H1 (cell line): ENCODE measurements at regions of chr19 and their contacts with region 1.

Region 1: DNA sequence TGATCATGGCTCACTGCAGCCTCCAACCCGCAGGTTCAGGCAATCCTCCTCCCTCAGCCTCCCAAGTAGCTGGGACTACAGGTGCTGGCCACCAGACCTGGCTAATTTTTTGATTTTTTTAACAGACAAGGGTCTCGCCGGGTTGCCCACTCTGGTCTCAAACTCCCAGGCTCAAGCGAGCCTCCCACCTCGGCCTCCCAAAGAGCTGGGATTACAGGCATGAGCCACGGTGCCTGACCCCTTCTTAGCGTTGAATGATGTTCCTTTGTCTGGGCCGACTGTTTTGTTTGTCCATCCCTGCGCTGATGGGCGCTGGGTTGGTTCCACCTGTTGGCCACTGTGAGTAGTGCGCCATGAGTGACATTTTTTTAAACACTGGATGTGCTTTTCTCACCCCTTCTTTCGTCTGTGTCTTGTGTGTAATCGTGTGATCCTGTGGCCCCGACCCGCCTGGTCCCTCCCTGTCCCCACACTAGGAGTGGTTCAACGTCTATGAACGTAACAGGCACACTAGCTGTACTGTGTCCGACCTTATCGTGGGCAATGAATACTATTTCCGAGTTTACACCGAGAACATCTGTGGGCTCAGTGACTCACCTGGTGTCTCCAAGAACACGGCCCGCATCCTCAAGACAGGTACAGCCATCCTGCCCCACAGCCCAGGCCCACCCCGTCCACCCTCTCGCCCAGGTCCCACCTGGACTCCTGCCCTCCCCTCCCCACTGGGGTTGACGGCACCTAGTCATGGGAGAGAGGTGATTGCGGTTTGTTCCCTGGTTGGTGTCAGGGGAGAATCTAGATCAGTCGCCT is 15.0 kb upstream of the EMC10 start:
- DNase-seq: peak in 1 of 2 experiments; percentile 84
- H3K4me3 ChIP-seq: no peak overlapping the region
- H3K27ac ChIP-seq: no peak overlapping the region
- H3K4me1 ChIP-seq: peaks cover 0 to 10% (median 2%) of the 10 kb centered on the region in 4 experiments; a peak in 5 of 7 replicates
- H3K27me3 ChIP-seq: no peaks in the 10 kb centered on the region
- CTCF ChIP-seq: peak; percentile 81 to 92 (median 84)
- EP300 ChIP-seq: no peak
- POLR2A ChIP-seq: no peak
- RAD21 ChIP-seq: peak; percentile 84 to 86

Region 2: GRCh38 chr19:50357178-50358100 is 103.8 kb before region 1 on chr19:
- CTCF ChIA-PET with region 1: interaction called, 11 read pairs
- POLR2A ChIA-PET with region 1: interaction called, 3 read pairs
- DNase-seq: peak; percentile 56 to 95
- H3K4me3 ChIP-seq: peak overlapping the region in 1 of 4 experiments; percentile 16; a peak in 1 of 8 replicates
- H3K27ac ChIP-seq: no peak overlapping the region
- H3K4me1 ChIP-seq: peaks cover 0 to 2% (median 0%) of the 10 kb centered on the region in 4 experiments; a peak in 2 of 7 replicates
- H3K27me3 ChIP-seq: no peaks in the 10 kb centered on the region; a peak in 2 of 7 replicates
- CTCF ChIP-seq: peak; percentile 71 to 87 (median 82)
- EP300 ChIP-seq: no peak
- POLR2A ChIP-seq: no peak
- RAD21 ChIP-seq: peak; percentile 77 to 84

Region 3: GRCh38 chr19:50368649-50369570 is 92.4 kb before region 1 on chr19:
- CTCF ChIA-PET with region 1: interaction called, 19 read pairs
- POLR2A ChIA-PET with region 1: interaction called, 5 read pairs
- DNase-seq: peak in 1 of 2 experiments; percentile 95
- H3K4me3 ChIP-seq: peak overlapping the region; percentile 54 to 72 (median 68)
- H3K27ac ChIP-seq: no peak overlapping the region
- H3K4me1 ChIP-seq: no peaks in the 10 kb centered on the region; a peak in 2 of 7 replicates
- H3K27me3 ChIP-seq: no peaks in the 10 kb centered on the region; a peak in 1 of 7 replicates
- CTCF ChIP-seq: peak; percentile 70 to 92 (median 85)
- EP300 ChIP-seq: no peak; a peak in 1 of 3 replicates
- POLR2A ChIP-seq: 0 out of 3 replicates have a peak, but pooled peaks of 1 of the 2 experiments have one; percentile 23
- RAD21 ChIP-seq: peak; percentile 86 to 88

Region 4: GRCh38 chr19:50414864-50415660 is 46.2 kb before region 1 on chr19:
- CTCF ChIA-PET with region 1: interaction called, 13 read pairs
- POLR2A ChIA-PET with region 1: interaction called, 5 read pairs
- DNase-seq: peak; percentile 79 to 98
- H3K4me3 ChIP-seq: no peak overlapping the region
- H3K27ac ChIP-seq: no peak overlapping the region; the same call in 1 of the 2 replicates
- H3K4me1 ChIP-seq: peaks cover 0 to 20% (median 12%) of the 10 kb centered on the region in 4 experiments; a peak in 6 of 7 replicates
- H3K27me3 ChIP-seq: peaks cover 0 to 2% (median 0%) of the 10 kb centered on the region in 4 experiments; a peak in 1 of 7 replicates
- CTCF ChIP-seq: peak; percentile 94 to 99 (median 95)
- EP300 ChIP-seq: no peak
- POLR2A ChIP-seq: no peak
- RAD21 ChIP-seq: peak; percentile 65 to 76

Region 5: GRCh38 chr19:50431343-50432220 is 29.7 kb before region 1 on chr19:
- CTCF ChIA-PET with region 1: interaction called, 13 read pairs
- POLR2A ChIA-PET with region 1: interaction called, 4 read pairs
- DNase-seq: peak; percentile 66 to 99
- H3K4me3 ChIP-seq: peak overlapping the region; percentile 52 to 74 (median 62)
- H3K27ac ChIP-seq: peak overlapping the region; percentile 62; the same call in 1 of the 2 replicates
- H3K4me1 ChIP-seq: peaks cover 2 to 18% (median 13%) of the 10 kb centered on the region in 4 experiments
- H3K27me3 ChIP-seq: peaks cover 0 to 19% (median 8%) of the 10 kb centered on the region in 4 experiments; a peak in 4 of 7 replicates
- CTCF ChIP-seq: no peak
- EP300 ChIP-seq: peak in 1 of 2 experiments; percentile 37; a peak in 1 of 3 replicates
- POLR2A ChIP-seq: peak in 1 of 2 experiments; percentile 63; a peak in 2 of 3 replicates
- RAD21 ChIP-seq: no peak

Region 6: DNA sequence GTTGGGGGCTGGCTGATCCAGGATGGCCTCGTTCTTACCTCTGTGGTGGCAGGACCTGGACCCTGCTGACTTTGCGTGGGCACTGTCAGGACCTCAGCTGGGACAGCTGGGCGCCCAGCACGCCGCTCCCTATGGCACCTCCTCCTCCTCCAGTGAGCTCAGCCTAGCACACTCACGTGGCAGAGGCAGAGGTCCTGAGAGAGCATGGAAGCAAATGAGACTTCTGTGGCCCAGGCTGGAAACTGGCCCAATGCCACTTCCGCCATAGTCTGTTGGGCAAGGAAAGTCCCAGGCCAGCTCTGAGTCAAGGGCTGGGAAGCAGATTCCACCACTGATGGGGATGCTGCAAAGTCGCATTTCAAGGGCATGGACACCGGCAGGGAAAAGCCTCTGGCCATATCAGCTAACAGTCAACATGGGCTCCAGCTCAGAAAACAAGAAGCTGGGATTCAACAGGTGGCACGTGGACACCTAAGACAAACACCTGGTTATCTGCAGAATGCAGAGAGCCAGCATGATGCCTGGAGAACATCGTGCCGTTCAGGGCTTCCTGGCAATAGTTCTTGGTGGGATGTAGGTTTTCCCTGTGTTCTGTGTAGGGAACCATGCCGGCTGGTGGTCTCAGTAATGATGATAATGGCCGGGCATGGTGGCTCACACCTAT is 11.9 kb before region 1 on chr19:
- CTCF ChIA-PET with region 1: interaction called, 16 read pairs
- POLR2A ChIA-PET with region 1: no interaction called
- DNase-seq: no peak
- H3K4me3 ChIP-seq: no peak overlapping the region
- H3K27ac ChIP-seq: no peak overlapping the region
- H3K4me1 ChIP-seq: peaks cover 0 to 7% (median 0%) of the 10 kb centered on the region in 4 experiments; a peak in 1 of 7 replicates
- H3K27me3 ChIP-seq: no peaks in the 10 kb centered on the region; a peak in 1 of 7 replicates
- CTCF ChIP-seq: no peak
- EP300 ChIP-seq: no peak
- POLR2A ChIP-seq: no peak
- RAD21 ChIP-seq: no peak

Region 7: DNA sequence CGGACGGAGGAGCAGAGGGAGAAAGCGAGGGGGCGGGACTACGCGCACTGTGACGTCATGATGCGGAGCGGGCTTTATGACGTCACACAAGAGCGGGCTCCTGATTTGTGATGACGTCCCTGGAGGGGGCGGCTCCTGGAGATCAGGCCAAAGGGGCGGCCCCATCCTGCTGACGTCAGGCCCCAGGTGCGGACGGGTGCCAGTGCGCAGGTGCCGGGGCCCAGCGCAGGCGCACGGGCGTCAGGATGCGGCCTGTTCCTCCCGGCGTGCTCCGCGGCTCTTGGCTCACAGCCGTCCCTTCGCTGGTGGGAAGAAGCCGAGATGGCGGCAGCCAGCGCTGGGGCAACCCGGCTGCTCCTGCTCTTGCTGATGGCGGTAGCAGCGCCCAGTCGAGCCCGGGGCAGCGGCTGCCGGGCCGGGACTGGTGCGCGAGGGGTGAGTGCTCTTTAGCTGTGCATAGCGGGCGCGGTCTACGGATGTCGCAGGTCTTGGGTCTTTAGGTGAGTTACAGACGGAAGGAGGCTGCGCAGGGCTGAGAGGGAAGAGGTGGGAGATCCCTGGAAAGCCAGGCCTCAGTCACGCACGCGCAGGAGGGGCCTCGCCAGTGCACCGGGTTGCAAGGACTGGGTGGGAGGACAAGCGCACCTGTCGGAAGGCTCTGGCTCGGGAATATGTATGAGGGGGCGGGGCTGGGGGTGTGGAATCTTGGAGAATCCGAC is 15.1 kb after region 1 on chr19 and contains the starts of genes EMC10 and GARIN5A:
- CTCF ChIA-PET with region 1: interaction called, 21 read pairs
- POLR2A ChIA-PET with region 1: interaction called, 8 read pairs
- DNase-seq: peak; percentile 93 to 98
- H3K4me3 ChIP-seq: peak within 1 kb of the TSS; percentile 79 to 92 (median 85)
- H3K27ac ChIP-seq: peak within 1 kb of the TSS; percentile 86
- H3K4me1 ChIP-seq: no peaks in the 10 kb centered on the region
- H3K27me3 ChIP-seq: no peaks in the 10 kb centered on the region; a peak in 1 of 7 replicates
- CTCF ChIP-seq: peak in 1 of 3 experiments; percentile 5; a peak in 1 of 4 replicates
- EP300 ChIP-seq: no peak
- POLR2A ChIP-seq: peak in 1 of 2 experiments; percentile 92; a peak in 2 of 3 replicates
- RAD21 ChIP-seq: no peak
- total RNA-seq, gene EMC10: 103 and 105 TPM in 2 replicates
- total RNA-seq, gene GARIN5A: 8.1 and 9.1 TPM in 2 replicates

Region 8: GRCh38 chr19:50496189-50497021 is 35.1 kb after region 1 on chr19:
- CTCF ChIA-PET with region 1: no interaction called
- POLR2A ChIA-PET with region 1: no interaction called
- DNase-seq: no peak
- H3K4me3 ChIP-seq: no peak overlapping the region
- H3K27ac ChIP-seq: no peak overlapping the region
- H3K4me1 ChIP-seq: peaks cover 0 to 13% (median 5%) of the 10 kb centered on the region in 4 experiments; a peak in 5 of 7 replicates
- H3K27me3 ChIP-seq: peaks cover 8 to 67% (median 62%) of the 10 kb centered on the region in 4 experiments
- CTCF ChIP-seq: no peak
- EP300 ChIP-seq: no peak
- POLR2A ChIP-seq: no peak
- RAD21 ChIP-seq: no peak